Common myeloid progenitor, CD34-positive (primary cell): ENCODE measurements at regions of chr13 and their contacts with region 1.

Region 1: GRCh38 chr13:23888658-23889614 is at the start of gene MIPEP:
- DNase-seq: peak; percentile 91 to 94 (median 93)
- H3K4me3 ChIP-seq: peak within 1 kb of the TSS; percentile 75 to 95 (median 87)
- H3K27ac ChIP-seq: peak within 1 kb of the TSS; percentile 54 to 77
- H3K4me1 ChIP-seq: peaks cover 5 to 20% (median 12%) of the 10 kb centered on the region in 4 experiments
- H3K27me3 ChIP-seq: no peaks in the 10 kb centered on the region

Region 2: DNA sequence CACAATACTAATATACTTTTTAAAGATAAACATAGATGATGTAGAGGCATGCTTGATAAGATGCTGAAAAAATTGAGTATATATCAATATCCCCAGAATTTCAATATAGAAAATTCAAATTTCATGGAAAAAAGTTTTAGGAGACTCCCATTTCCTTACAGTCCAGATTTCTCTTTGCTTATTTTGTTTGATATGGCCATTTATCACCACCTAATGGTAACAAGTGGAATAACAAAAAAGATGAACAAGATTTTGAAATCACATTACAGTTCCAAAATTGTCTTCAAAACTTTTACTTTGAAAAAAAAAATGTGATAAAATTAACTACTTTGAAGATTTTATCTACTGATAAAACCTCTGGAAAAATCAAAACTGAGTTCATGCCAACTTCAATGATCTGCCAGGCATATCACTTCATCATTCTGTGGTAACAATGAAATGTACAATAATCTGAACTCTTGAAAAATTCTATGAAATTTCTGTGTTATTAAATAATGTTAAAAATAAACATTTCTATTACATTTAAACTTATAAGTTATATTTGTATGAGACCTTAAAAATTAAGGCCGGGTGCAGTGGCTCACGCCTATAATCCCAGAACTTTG is 17.2 kb before region 1 on chr13:
- CTCF ChIA-PET with region 1: interaction called, 17 read pairs
- POLR2A ChIA-PET with region 1: interaction called, 3 read pairs
- DNase-seq: peak; percentile 22 to 38 (median 32)
- H3K4me3 ChIP-seq: no peak overlapping the region
- H3K27ac ChIP-seq: no peak overlapping the region
- H3K4me1 ChIP-seq: peaks cover 0 to 2% (median 0%) of the 10 kb centered on the region in 4 experiments
- H3K27me3 ChIP-seq: no peaks in the 10 kb centered on the region

Region 3: DNA sequence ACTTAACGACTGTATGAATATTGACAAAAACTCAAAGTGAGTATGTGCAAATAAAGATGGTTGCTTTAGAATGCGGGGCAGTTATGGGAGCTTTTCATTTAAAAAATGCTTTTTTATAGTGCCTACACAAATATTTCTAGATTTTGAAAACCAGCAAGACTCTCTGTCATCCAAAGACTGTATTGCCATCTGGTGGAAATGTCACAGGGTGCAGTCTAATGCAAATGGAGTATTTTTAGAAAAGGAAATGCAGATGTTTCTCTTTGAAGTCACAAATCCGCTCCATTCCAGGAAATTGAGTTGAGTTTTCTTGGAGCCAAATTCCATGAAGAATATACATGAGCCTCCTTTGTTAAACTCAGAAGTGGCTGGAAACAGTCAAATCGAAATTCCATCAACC is 10.6 kb after region 1 on chr13:
- CTCF ChIA-PET with region 1: interaction called, 16 read pairs
- POLR2A ChIA-PET with region 1: no interaction called
- DNase-seq: peak; percentile 20 to 63 (median 56)
- H3K4me3 ChIP-seq: no peak overlapping the region
- H3K27ac ChIP-seq: no peak overlapping the region
- H3K4me1 ChIP-seq: peaks cover 0 to 10% (median 5%) of the 10 kb centered on the region in 4 experiments
- H3K27me3 ChIP-seq: peaks cover 0 to 37% (median 16%) of the 10 kb centered on the region in 5 experiments

Region 4: GRCh38 chr13:24187185-24187584 is 298.2 kb after region 1 on chr13:
- CTCF ChIA-PET with region 1: no interaction called
- POLR2A ChIA-PET with region 1: no interaction called
- DNase-seq: no peak
- H3K4me3 ChIP-seq: no peak overlapping the region
- H3K27ac ChIP-seq: no peak overlapping the region
- H3K4me1 ChIP-seq: peaks cover 0 to 13% (median 4%) of the 10 kb centered on the region in 4 experiments
- H3K27me3 ChIP-seq: no peaks in the 10 kb centered on the region